CD4-positive, alpha-beta T cell (primary cell): ENCODE measurements at regions of chr1 and their contacts with region 1.

Region 1: GRCh38 chr1:209747580-209748262 is 8.1 kb upstream of the TRAF3IP3 start:
- DNase-seq: peak; percentile 69 to 93 (median 78)
- ATAC-seq: peak; percentile 79
- H3K4me3 ChIP-seq: peak overlapping the region; percentile 58
- H3K4me3 Mint-ChIP-seq: peak overlapping the region; percentile 91
- H3K27ac ChIP-seq: peak overlapping the region; percentile 66
- H3K27ac Mint-ChIP-seq: peak overlapping the region; percentile 89
- H3K4me1 ChIP-seq: peaks cover 47% of the 10 kb centered on the region
- H3K4me1 Mint-ChIP-seq: peaks cover 56% of the 10 kb centered on the region
- H3K27me3 ChIP-seq: no peaks in the 10 kb centered on the region
- H3K27me3 Mint-ChIP-seq: no peaks in the 10 kb centered on the region
- CTCF ChIP-seq: peak; percentile 99

Region 2: DNA sequence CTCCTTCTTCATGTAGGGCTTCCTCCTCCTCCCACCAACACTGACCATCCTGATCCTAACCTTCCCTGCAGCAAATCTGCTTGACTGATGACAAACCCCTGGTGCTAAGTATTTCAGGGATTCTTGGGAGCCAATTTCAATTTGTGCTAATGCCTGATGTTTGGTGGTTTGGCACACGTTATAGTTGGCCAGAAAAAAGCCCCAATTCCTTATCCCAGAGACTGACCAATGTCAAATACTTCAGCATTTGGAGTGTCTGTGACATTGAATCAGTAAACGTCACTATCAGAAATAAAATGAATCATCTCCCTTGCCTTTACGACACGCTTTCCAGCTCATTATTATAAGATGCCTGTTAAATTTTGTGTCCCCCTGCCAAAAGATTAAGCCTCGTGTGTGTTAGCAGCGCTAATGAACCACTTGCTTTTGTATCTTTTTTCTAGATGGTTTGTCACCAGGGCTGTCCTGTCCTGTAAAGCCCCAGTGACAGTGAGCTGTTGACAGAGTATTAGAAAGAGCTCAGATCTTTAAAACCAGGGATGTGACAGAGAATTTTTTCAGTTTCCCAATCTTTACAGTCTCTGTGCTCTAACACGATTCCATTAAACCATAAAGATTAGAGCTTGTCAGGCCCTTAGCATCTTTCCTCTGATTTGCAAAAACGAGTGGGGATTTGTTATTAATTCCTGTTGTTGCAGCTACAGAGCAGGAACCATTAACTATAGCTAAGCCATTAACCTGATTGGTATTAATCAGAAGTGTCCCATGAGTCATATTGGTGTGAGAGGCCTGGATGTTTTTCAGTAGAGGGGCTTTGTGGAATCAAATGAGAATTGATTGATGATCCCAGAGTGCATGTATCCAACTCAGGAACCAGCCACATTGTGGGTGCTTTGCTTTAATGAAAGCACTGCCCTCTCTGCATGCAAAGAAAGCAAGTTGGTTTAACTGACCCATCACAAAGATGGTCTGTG is 838.4 kb before region 1 on chr1:
- CTCF ChIA-PET with region 1: no interaction called
- POLR2A ChIA-PET with region 1: no interaction called
- intact Hi-C with region 1: no loop called
- DNase-seq: no peak
- ATAC-seq: no peak
- H3K4me3 ChIP-seq: no peak overlapping the region
- H3K4me3 Mint-ChIP-seq: no peak overlapping the region
- H3K27ac ChIP-seq: no peak overlapping the region
- H3K27ac Mint-ChIP-seq: no peak overlapping the region
- H3K4me1 ChIP-seq: no peaks in the 10 kb centered on the region
- H3K4me1 Mint-ChIP-seq: no peaks in the 10 kb centered on the region
- H3K27me3 ChIP-seq: no peaks in the 10 kb centered on the region
- H3K27me3 Mint-ChIP-seq: peaks cover 7% of the 10 kb centered on the region
- CTCF ChIP-seq: no peak

Region 3: GRCh38 chr1:209576798-209577197 is 170.9 kb before region 1 on chr1:
- CTCF ChIA-PET with region 1: interaction called, 8 read pairs
- POLR2A ChIA-PET with region 1: no interaction called
- intact Hi-C with region 1: loop called in 1 of 2 experiments (anchors 2 kb)
- DNase-seq: peak; percentile 34 to 77 (median 54)
- ATAC-seq: peak; percentile 74
- H3K4me3 ChIP-seq: no peak overlapping the region
- H3K4me3 Mint-ChIP-seq: no peak overlapping the region
- H3K27ac ChIP-seq: no peak overlapping the region
- H3K27ac Mint-ChIP-seq: no peak overlapping the region
- H3K4me1 ChIP-seq: no peaks in the 10 kb centered on the region
- H3K4me1 Mint-ChIP-seq: no peaks in the 10 kb centered on the region
- H3K27me3 ChIP-seq: peaks cover 4 to 10% of the 10 kb centered on the region in 2 experiments
- H3K27me3 Mint-ChIP-seq: no peaks in the 10 kb centered on the region
- CTCF ChIP-seq: peak; percentile 94

Region 4: GRCh38 chr1:209692745-209693504 is 54.8 kb before region 1 on chr1:
- CTCF ChIA-PET with region 1: interaction called, 3 read pairs
- POLR2A ChIA-PET with region 1: no interaction called
- intact Hi-C with region 1: loop called (anchors 2 kb)
- DNase-seq: peak; percentile 45 to 84 (median 66)
- ATAC-seq: peak; percentile 54
- H3K4me3 ChIP-seq: no peak overlapping the region
- H3K4me3 Mint-ChIP-seq: no peak overlapping the region
- H3K27ac ChIP-seq: no peak overlapping the region
- H3K27ac Mint-ChIP-seq: no peak overlapping the region
- H3K4me1 ChIP-seq: peaks cover 9% of the 10 kb centered on the region
- H3K4me1 Mint-ChIP-seq: peaks cover 35% of the 10 kb centered on the region
- H3K27me3 ChIP-seq: no peaks in the 10 kb centered on the region
- H3K27me3 Mint-ChIP-seq: no peaks in the 10 kb centered on the region
- CTCF ChIP-seq: peak; percentile 85

Region 5: DNA sequence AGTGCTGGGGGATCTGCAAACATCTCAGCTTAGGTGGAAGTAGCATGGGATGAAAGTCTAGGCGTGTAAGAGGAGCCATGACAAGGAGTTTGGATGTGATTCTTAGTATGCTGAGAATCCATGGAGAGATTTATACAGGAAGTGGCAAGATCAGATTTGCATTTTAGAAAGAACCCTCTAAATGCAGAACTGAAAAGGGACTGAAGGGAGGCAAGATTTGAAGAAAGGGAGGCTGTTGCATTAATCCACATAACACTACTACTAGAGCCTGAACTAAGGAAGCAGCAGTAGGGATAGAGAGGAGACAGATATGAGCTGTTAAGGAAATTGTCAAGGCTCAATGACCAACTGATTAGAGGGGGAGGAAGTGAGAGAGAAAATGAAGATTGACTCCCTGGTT is 26.9 kb after region 1 on chr1:
- CTCF ChIA-PET with region 1: interaction called, 80 read pairs
- POLR2A ChIA-PET with region 1: interaction called, 478 read pairs
- intact Hi-C with region 1: no loop called
- DNase-seq: no peak
- ATAC-seq: no peak
- H3K4me3 ChIP-seq: no peak overlapping the region
- H3K4me3 Mint-ChIP-seq: peak overlapping the region; percentile 4
- H3K27ac ChIP-seq: peak overlapping the region; percentile 29 to 43
- H3K27ac Mint-ChIP-seq: no peak overlapping the region
- H3K4me1 ChIP-seq: peaks cover 60% of the 10 kb centered on the region
- H3K4me1 Mint-ChIP-seq: peaks cover 32% of the 10 kb centered on the region
- H3K27me3 ChIP-seq: no peaks in the 10 kb centered on the region
- H3K27me3 Mint-ChIP-seq: no peaks in the 10 kb centered on the region
- CTCF ChIP-seq: no peak

Region 6: GRCh38 chr1:209827384-209828262 is 79.9 kb after region 1 on chr1 and contains the start of gene UTP25:
- CTCF ChIA-PET with region 1: interaction called, 12 read pairs
- POLR2A ChIA-PET with region 1: interaction called, 3 read pairs
- intact Hi-C with region 1: loop called in 1 of 2 experiments (anchors 5 kb)
- DNase-seq: peak; percentile 82 to 97 (median 90)
- ATAC-seq: peak; percentile 88
- H3K4me3 ChIP-seq: peak within 1 kb of the TSS; percentile 96
- H3K4me3 Mint-ChIP-seq: peak within 1 kb of the TSS; percentile 93
- H3K27ac ChIP-seq: peak within 1 kb of the TSS; percentile 62 to 89
- H3K27ac Mint-ChIP-seq: peak within 1 kb of the TSS; percentile 91
- H3K4me1 ChIP-seq: peaks cover 29% of the 10 kb centered on the region
- H3K4me1 Mint-ChIP-seq: peaks cover 50% of the 10 kb centered on the region
- H3K27me3 ChIP-seq: no peaks in the 10 kb centered on the region
- H3K27me3 Mint-ChIP-seq: peaks cover 7% of the 10 kb centered on the region
- CTCF ChIP-seq: peak; percentile 71
- total RNA-seq, gene UTP25: 6.0 to 6.4 TPM

Region 7: GRCh38 chr1:209860293-209860881 is 112.7 kb after region 1 on chr1:
- CTCF ChIA-PET with region 1: no interaction called
- POLR2A ChIA-PET with region 1: no interaction called
- intact Hi-C with region 1: no loop called
- DNase-seq: peak; percentile 50 to 86 (median 60)
- ATAC-seq: peak; percentile 81
- H3K4me3 ChIP-seq: no peak overlapping the region
- H3K4me3 Mint-ChIP-seq: no peak overlapping the region
- H3K27ac ChIP-seq: no peak overlapping the region
- H3K27ac Mint-ChIP-seq: no peak overlapping the region
- H3K4me1 ChIP-seq: no peaks in the 10 kb centered on the region
- H3K4me1 Mint-ChIP-seq: no peaks in the 10 kb centered on the region
- H3K27me3 ChIP-seq: peaks cover 4 to 7% of the 10 kb centered on the region in 2 experiments
- H3K27me3 Mint-ChIP-seq: peaks cover 27% of the 10 kb centered on the region
- CTCF ChIP-seq: peak; percentile 97